ENCODE measurements at regions of chr19 and their contacts with region 1.

Region 1: DNA sequence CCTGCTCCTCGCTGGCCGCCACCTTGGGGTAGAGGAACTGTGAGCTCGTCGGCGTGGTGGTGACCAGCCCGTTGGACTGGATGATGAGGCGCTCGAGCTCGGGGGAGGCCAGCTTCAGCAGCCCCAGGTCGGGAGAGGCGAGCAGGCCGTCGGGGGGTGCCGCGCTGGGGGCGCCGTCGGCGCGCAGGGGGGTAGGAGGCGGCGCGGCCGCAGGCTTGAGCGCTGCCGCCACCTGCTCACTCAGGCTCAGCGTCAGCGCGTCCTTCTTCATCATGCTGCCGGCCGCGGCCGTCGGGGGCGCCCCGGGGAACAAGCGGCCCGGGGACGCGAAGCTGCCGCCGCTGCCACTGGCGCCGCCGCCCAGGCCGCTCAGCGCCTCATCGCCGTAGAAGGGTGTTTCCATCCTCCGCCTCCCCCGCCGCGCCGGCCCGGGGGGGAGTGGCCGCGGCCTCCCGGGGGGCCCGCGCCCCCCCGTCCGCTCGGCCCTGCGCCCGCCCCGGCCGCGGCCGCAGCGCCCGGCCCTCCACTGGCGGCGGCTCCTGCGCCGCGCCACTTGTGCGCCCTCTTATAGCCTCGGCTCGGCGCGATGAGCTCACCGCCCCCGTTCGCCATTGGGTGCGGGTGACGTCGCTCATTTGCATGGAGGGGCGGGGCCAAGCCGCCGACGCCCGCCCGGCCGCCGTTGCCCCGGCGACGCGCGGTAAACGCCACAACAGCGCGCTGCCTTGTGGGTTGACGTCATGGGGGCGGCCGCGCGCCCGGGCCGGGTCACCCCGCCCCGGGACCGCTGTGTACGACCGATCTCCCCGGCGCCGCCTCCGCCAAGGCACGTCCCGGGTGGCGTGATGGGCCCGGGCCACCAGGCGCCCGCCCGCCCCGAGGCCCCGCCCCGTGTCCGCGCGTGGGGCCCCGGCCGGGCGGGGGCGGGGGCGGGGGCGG is at the start of gene JUND:
- DNase-seq: peak; percentile 98
- ATAC-seq: peak; percentile 69
- H3K4me3 Mint-ChIP-seq: peak within 1 kb of the TSS; percentile 96
- H3K27ac Mint-ChIP-seq: peak within 1 kb of the TSS; percentile 96
- H3K4me1 Mint-ChIP-seq: peaks cover 54% of the 10 kb centered on the region
- H3K27me3 Mint-ChIP-seq: no peaks in the 10 kb centered on the region
- total RNA-seq, gene JUND: 462 to 469 TPM

Region 2: DNA sequence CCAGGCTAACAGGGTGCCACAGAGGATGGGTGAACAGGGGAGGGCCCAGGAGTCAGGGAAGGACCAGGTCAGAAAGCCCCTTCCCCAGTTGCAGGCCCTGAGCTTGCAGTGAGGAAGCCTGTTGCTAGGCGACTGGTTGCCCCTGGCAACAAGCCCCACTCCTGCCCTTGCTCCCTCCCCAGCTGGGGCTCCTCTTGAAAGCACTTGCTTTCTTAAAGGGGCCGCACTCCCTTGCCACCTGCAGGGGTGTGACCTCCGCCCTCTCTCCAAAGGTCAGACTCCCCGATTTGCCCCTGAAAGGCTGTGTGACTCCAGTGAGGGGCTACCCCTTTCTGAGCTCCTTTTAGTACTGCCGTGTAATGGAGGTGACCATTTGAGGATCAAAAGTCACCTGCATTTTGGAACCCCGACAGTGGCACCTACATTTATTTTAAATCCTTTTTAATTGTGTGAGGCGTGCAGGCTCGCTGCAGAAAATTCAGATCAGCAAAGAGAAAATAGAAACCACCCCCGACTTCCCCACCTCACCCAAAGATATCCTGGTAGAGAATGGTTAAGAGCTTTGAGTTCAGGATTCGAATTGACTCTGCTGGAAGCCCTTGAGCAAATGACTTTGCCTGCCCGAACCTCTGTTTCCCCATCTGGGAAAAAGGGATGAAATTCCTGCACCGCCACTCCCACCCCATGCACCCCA is 525.2 kb before region 1 on chr19:
- CTCF ChIA-PET with region 1: no interaction called
- POLR2A ChIA-PET with region 1: no interaction called
- DNase-seq: peak; percentile 59
- ATAC-seq: no peak
- H3K4me3 Mint-ChIP-seq: no peak overlapping the region
- H3K27ac Mint-ChIP-seq: peak overlapping the region; percentile 70
- H3K4me1 Mint-ChIP-seq: peaks cover 39% of the 10 kb centered on the region
- H3K27me3 Mint-ChIP-seq: no peaks in the 10 kb centered on the region

Region 3: DNA sequence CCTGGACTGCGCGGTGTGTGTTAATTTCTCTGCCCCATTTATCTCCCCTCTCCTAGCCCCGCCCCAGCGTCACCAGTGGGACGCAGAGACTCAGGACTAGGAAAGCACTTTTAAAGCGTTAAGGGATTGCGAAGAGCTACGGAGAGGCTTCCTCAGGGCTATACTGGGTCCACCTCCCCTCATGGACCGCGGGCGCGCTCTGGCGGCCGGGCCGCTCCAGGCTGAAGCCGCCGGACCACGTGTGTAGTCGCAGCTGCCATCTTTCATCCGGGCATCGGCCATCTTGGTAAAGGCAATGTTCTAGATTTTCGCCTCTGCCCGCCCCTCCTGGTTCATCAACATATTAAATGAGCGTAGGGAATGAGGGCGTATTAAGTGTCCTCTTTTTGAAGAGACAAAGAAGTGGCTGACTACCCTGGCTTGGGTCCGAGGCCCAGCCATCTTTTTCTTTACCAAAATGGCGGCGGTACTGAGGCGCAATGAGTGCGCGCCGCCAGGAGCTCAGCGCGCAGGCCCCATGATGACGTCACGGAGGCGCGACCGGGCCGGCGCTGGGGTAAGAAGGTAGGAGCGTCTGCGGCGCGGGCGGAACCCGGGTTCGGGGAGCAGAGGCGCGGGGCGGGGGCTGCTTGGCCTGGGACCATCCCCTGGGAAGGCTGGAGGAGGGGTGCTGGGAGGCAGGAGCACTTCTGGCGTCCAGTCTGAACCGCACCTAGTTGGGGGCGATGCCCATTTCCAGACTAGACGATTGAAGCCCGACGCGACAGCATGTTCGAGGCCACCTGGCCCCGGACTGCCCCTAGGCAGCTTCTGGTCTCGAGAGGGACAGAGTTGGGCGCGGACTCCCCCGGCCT is 348.6 kb before region 1 on chr19 and contains the start of gene CCDC124:
- CTCF ChIA-PET with region 1: no interaction called
- POLR2A ChIA-PET with region 1: no interaction called
- DNase-seq: peak; percentile 95
- ATAC-seq: peak; percentile 99
- H3K4me3 Mint-ChIP-seq: peak within 1 kb of the TSS; percentile 83
- H3K27ac Mint-ChIP-seq: peak within 1 kb of the TSS; percentile 96
- H3K4me1 Mint-ChIP-seq: peaks cover 21% of the 10 kb centered on the region
- H3K27me3 Mint-ChIP-seq: peaks cover 2% of the 10 kb centered on the region
- total RNA-seq, gene CCDC124: 85.8 to 88.0 TPM

Region 4: DNA sequence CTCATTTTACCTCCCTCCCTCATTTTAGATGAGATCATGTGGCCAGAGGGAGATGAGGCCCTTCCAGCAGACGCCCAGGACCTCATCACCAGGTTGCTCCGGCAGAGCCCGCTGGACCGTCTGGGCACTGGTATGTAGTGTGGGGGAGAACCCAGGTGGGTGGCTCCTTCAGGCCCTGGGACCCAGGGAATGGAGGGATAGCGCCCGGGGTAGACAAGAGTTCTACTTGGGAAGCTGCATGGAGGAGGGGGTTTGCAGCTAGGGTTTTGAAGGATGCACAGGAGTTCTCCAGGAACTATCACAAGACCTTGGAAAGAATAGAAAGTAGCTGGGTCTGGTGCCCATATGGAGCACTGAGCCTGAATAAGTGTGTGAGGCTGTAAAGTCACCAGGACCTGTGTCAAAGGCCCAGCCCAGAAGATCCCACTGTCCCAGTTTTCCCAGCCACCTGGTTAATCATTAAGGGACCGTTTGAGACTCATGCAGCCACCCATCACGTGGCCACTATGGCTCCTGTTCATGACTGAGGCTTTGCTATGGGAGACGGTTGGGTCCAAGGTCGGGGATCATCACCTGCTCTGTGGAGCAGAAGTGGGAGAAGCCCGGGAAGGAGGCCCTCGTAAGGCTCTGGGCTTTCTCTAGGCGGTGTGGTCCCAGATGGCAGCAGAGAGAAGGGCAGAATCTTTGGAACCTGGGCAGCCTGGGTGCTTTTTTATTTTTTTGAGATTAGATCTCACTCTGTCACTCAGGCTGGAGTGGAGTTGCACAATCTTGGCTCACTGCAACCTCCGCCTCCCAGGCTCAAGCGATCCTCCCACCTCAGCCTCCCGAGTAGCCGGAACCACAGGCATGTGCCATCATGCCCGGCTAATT is 145.4 kb before region 1 on chr19:
- CTCF ChIA-PET with region 1: no interaction called
- POLR2A ChIA-PET with region 1: no interaction called
- DNase-seq: no peak
- ATAC-seq: no peak
- H3K4me3 Mint-ChIP-seq: no peak overlapping the region
- H3K27ac Mint-ChIP-seq: peak overlapping the region; percentile 57
- H3K4me1 Mint-ChIP-seq: no peaks in the 10 kb centered on the region
- H3K27me3 Mint-ChIP-seq: no peaks in the 10 kb centered on the region

Region 5: DNA sequence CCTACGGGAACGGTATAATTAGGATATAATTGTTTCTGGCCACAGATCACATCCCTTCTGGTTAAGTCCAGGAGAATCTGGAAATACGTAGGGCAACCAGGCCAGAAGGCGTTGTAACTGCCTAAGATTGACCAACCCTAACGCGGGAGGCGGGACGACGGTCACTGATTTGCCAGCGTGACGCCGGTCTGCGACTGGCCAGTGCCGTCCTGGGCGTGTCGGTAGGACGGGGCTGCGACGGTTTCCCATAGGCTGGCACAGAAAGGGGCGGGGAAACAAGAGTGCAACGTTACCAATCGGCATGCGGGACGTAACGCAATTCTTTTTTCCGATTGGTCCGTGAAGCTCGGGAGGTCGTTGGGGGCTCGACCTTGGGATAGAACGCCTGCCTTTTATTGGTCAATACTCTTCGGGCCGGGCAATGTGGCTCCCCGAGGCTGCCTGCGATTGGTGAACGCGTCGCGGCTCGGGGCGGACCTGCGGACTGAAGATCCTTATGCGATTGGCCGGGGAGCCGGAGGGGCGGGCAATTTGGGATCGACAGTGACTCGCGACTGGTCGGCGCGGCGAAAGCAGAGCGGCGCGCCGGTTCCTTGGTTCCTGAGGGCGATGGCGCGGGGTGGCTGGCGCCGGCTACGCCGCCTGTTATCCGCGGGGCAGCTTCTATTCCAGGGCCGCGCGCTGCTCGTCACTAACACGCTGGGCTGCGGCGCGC is 88.5 kb before region 1 on chr19 and contains the start of gene MPV17L2:
- CTCF ChIA-PET with region 1: interaction called, 38 read pairs
- POLR2A ChIA-PET with region 1: interaction called, 14 read pairs
- DNase-seq: peak; percentile 100
- ATAC-seq: peak; percentile 95
- H3K4me3 Mint-ChIP-seq: peak within 1 kb of the TSS; percentile 90
- H3K27ac Mint-ChIP-seq: peak within 1 kb of the TSS; percentile 93
- H3K4me1 Mint-ChIP-seq: peaks cover 26% of the 10 kb centered on the region
- H3K27me3 Mint-ChIP-seq: no peaks in the 10 kb centered on the region
- total RNA-seq, gene MPV17L2: 9.2 to 10.9 TPM

Region 6: GRCh38 chr19:18251587-18252369 is 29.6 kb before region 1 on chr19:
- CTCF ChIA-PET with region 1: interaction called, 33 read pairs
- POLR2A ChIA-PET with region 1: interaction called, 7 read pairs
- DNase-seq: peak; percentile 88
- ATAC-seq: peak; percentile 74
- H3K4me3 Mint-ChIP-seq: no peak overlapping the region
- H3K27ac Mint-ChIP-seq: no peak overlapping the region
- H3K4me1 Mint-ChIP-seq: no peaks in the 10 kb centered on the region
- H3K27me3 Mint-ChIP-seq: peaks cover 23% of the 10 kb centered on the region

Region 7: GRCh38 chr19:18291590-18292461 is 10.5 kb after region 1 on chr19:
- CTCF ChIA-PET with region 1: interaction called, 159 read pairs
- POLR2A ChIA-PET with region 1: interaction called, 520 read pairs
- DNase-seq: peak; percentile 93
- ATAC-seq: peak; percentile 41
- H3K4me3 Mint-ChIP-seq: peak overlapping the region; percentile 89
- H3K27ac Mint-ChIP-seq: peak overlapping the region; percentile 93
- H3K4me1 Mint-ChIP-seq: peaks cover 72% of the 10 kb centered on the region
- H3K27me3 Mint-ChIP-seq: no peaks in the 10 kb centered on the region

Region 8: DNA sequence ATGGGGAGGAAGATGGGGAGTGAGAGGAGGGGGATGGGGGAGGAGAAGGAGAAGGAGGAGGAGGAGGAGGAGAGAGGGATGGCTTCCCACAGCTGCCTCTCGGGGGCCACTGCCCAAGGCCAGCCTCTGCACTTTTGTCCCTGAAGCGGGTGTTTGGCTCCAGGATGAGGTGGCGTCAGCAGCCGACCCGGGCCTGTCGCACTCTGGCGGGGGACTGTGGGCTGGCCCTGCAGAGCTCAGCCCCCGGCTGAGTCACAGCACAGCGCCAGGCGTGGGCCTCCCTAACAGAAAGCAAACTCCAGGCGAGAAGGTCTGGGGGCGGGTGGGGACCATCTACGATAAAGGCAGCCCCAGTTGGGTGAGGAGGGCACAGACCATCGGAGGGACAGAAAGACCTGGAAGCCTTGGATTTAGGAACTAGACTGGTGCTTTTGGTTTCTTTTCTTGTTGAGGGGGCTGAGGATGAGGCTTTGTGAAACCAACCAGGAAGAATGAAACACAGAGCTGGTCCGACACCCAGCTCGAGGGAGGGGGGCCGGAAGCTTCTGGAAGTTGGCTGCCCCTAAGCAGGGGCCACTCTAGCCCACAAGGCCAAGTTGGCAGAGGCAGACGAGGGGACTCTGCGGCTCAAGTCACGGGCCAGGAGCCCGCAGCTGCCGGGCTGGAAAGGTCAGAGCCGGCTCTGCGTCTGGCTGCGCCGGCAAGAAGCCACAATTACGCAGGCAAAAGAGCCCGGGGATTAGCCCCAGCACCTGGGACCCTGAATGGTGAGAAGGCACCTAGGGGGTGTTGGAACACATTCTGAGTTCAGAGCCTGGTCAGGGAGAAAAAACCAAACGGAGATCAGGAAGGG is 23.3 kb after region 1 on chr19:
- CTCF ChIA-PET with region 1: interaction called, 464 read pairs
- POLR2A ChIA-PET with region 1: interaction called, 647 read pairs
- DNase-seq: peak; percentile 87
- ATAC-seq: peak; percentile 74
- H3K4me3 Mint-ChIP-seq: peak overlapping the region; percentile 99
- H3K27ac Mint-ChIP-seq: peak overlapping the region; percentile 94
- H3K4me1 Mint-ChIP-seq: peaks cover 49% of the 10 kb centered on the region
- H3K27me3 Mint-ChIP-seq: no peaks in the 10 kb centered on the region

Region 9: DNA sequence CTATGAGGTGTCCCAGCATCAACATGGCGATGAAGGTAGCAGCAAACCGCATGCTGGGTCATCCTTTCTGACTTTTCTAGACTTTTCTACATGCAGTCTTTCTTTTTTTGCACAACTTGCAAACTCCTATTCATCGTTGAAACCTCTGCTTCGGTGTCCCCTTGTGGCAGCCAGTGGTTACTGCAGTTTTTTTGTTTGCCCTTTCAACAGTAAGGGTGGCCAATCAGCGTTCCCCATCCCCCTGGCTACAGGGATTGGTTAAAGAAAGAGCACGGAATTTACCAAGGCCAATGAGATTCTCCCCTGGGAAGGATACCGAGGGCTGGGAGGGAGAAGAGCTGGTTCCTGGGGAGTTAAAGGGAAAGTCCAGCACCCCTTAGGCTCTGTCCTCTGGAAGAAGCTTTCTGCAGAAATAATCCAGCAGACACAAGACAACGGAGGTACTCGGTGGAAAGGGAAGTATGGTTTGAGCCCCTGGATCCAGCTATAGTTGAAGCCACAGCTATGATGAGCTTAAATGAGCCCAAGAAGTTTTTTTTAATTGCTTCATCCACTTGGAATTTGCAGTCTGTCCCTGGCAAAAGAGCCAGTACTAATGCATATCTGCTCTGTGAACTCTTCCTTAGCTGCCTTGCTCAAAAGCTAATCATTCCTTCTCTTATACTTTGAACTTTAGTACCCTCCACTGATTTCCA is 47.1 kb after region 1 on chr19:
- CTCF ChIA-PET with region 1: interaction called, 455 read pairs
- POLR2A ChIA-PET with region 1: interaction called, 140 read pairs
- DNase-seq: peak; percentile 95
- ATAC-seq: peak; percentile 100
- H3K4me3 Mint-ChIP-seq: peak overlapping the region; percentile 71
- H3K27ac Mint-ChIP-seq: peak overlapping the region; percentile 2
- H3K4me1 Mint-ChIP-seq: peaks cover 22% of the 10 kb centered on the region
- H3K27me3 Mint-ChIP-seq: no peaks in the 10 kb centered on the region

Region 10: DNA sequence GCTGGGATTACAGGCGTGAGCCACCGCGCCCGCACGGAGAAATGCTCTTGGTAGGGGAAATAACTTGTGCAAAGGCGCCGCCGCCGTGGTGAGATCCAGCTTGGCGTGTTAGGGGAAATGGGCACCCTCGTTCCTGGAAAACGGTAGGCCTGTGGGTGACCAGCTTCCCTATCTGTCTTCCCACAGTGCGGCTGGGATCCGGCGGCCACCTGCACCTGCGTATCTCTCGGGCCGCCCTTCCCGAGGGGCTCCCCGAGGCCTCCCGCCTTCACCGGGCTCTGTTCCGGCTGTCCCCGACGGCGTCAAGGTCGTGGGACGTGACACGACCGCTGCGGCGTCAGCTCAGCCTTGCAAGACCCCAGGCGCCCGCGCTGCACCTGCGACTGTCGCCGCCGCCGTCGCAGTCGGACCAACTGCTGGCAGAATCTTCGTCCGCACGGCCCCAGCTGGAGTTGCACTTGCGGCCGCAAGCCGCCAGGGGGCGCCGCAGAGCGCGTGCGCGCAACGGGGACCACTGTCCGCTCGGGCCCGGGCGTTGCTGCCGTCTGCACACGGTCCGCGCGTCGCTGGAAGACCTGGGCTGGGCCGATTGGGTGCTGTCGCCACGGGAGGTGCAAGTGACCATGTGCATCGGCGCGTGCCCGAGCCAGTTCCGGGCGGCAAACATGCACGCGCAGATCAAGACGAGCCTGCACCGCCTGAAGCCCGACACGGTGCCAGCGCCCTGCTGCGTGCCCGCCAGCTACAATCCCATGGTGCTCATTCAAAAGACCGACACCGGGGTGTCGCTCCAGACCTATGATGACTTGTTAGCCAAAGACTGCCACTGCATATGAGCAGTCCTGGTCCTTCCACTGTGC is 107.0 kb after region 1 on chr19:
- CTCF ChIA-PET with region 1: interaction called, 55 read pairs
- POLR2A ChIA-PET with region 1: interaction called, 4 read pairs
- DNase-seq: peak; percentile 83
- ATAC-seq: peak; percentile 90
- H3K4me3 Mint-ChIP-seq: peak overlapping the region; percentile 58
- H3K27ac Mint-ChIP-seq: no peak overlapping the region
- H3K4me1 Mint-ChIP-seq: peaks cover 18% of the 10 kb centered on the region
- H3K27me3 Mint-ChIP-seq: peaks cover 46% of the 10 kb centered on the region

Region 11: DNA sequence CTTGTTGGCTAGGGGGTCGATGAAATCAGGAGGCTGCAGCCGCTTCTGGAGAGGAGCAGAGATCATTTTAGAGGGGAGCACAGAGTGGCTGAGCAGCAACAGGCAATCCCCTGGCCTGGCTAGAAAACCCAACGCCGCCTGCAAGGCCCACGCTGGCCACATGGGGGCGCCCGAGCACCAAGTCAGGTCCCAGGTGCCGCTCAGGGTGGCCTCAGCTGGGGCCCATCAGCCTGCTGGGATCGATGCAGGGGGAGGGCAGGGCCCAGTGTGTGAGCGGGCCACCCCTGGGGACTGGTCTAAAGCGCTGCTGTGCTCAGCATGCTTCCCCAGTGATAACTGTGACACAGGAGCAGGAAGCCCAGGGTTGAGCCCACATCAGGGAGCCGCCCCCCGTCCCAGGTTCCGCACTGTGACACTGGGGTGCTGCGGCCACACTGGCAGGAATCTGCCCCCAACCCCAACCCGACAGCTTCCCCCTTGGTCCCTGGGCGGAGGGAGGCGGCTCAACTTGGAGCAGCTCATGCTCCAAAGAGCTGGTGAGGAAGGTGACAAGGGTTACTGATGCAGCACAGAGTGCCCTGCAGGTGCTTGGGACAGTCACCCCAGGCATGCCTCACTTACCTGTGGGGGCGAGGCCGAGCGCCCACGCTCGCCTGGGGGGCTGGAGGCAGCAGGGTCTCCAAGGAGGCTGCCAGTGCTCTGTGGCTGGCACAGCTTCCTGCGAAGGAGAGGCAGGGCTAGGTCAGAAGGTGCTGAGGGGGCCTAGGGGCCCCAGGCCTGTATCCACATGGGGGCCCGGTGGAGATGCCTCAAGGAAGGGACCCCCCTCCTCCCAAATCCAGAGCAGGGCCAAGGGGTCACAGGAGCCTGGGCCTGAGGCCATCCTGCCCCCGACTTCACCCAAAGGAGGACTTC is 169.8 kb after region 1 on chr19:
- CTCF ChIA-PET with region 1: no interaction called
- POLR2A ChIA-PET with region 1: no interaction called
- DNase-seq: peak; percentile 92
- ATAC-seq: peak; percentile 87
- H3K4me3 Mint-ChIP-seq: no peak overlapping the region
- H3K27ac Mint-ChIP-seq: no peak overlapping the region
- H3K4me1 Mint-ChIP-seq: peaks cover 2% of the 10 kb centered on the region
- H3K27me3 Mint-ChIP-seq: no peaks in the 10 kb centered on the region

Measured in activated CD8-positive, alpha-beta T cell treated with anti-CD3 and anti-CD28 coated beads, Interleukin-2, amount 10 ng/mL, durations not matched to agents 7 days and 5 days (primary cell).